Caco-2 (cell line): ENCODE measurements at regions of chr4 and their contacts with region 1.

Region 1: DNA sequence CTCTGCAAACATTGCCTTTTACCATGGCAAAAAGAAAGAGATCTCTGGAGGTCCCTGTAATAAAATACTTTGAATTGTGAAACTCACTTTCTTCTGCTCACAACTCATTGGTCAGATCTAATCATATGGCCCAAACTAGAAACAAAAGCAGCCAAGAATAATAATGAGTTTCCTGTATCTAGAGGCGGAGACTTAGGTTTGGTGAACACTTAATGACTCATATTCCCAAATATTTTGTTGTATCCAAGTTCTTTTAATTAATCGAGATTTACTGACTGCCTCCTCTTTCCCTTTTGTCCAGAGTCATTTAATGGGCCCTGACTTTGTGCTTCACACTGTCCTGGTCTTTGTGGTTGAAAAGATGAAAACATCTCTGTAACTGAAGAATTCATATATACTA is 190.6 kb downstream of the CCSER1 start:
- DNase-seq: no peak
- H3K4me3 ChIP-seq: no peak overlapping the region
- H3K4me3 Mint-ChIP-seq: no peak overlapping the region
- H3K27ac Mint-ChIP-seq: no peak overlapping the region
- H3K4me1 ChIP-seq: no peaks in the 10 kb centered on the region
- H3K4me1 Mint-ChIP-seq: no peaks in the 10 kb centered on the region
- H3K27me3 ChIP-seq: no peaks in the 10 kb centered on the region
- H3K27me3 Mint-ChIP-seq: no peaks in the 10 kb centered on the region
- CTCF ChIP-seq: no peak

Region 2: GRCh38 chr4:89268679-89269078 is 1049.1 kb before region 1 on chr4:
- CTCF ChIA-PET with region 1: no interaction called
- POLR2A ChIA-PET with region 1: no interaction called
- intact Hi-C with region 1: no loop called
- DNase-seq: no peak
- H3K4me3 ChIP-seq: no peak overlapping the region
- H3K4me3 Mint-ChIP-seq: no peak overlapping the region
- H3K27ac Mint-ChIP-seq: no peak overlapping the region
- H3K4me1 ChIP-seq: 0 out of 2 replicates have a peak, but pooled peaks cover 3% of the 10 kb centered on the region
- H3K4me1 Mint-ChIP-seq: no peaks in the 10 kb centered on the region
- H3K27me3 ChIP-seq: no peaks in the 10 kb centered on the region; the same call in 1 of the 2 replicates
- H3K27me3 Mint-ChIP-seq: peaks cover 2% of the 10 kb centered on the region
- CTCF ChIP-seq: no peak

Region 3: DNA sequence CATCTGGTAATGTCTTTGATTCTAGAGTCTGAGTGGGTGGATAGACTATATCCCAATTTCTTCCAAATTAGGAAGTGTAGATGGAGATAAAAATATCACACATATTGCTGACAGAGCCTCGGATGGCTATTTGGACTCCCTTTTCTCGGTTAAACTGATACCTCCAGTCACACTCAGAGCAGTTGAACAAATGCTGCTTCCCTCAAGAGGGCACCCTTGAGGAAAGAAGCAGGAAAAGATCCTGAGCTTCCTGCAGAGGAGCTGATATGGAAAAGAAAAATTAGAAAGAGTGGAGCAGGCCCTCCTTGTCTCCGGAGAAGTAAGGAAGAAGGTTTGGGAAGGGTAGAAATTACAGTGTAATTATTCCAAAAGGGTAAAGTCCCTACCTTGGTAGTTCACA is 286.8 kb before region 1 on chr4:
- CTCF ChIA-PET with region 1: no interaction called
- POLR2A ChIA-PET with region 1: no interaction called
- intact Hi-C with region 1: no loop called
- DNase-seq: peak in 1 of 2 experiments; percentile 44
- H3K4me3 ChIP-seq: no peak overlapping the region
- H3K4me3 Mint-ChIP-seq: no peak overlapping the region
- H3K27ac Mint-ChIP-seq: no peak overlapping the region
- H3K4me1 ChIP-seq: no peaks in the 10 kb centered on the region
- H3K4me1 Mint-ChIP-seq: no peaks in the 10 kb centered on the region
- H3K27me3 ChIP-seq: no peaks in the 10 kb centered on the region
- H3K27me3 Mint-ChIP-seq: no peaks in the 10 kb centered on the region
- CTCF ChIP-seq: peak; percentile 32 to 37

Region 4: DNA sequence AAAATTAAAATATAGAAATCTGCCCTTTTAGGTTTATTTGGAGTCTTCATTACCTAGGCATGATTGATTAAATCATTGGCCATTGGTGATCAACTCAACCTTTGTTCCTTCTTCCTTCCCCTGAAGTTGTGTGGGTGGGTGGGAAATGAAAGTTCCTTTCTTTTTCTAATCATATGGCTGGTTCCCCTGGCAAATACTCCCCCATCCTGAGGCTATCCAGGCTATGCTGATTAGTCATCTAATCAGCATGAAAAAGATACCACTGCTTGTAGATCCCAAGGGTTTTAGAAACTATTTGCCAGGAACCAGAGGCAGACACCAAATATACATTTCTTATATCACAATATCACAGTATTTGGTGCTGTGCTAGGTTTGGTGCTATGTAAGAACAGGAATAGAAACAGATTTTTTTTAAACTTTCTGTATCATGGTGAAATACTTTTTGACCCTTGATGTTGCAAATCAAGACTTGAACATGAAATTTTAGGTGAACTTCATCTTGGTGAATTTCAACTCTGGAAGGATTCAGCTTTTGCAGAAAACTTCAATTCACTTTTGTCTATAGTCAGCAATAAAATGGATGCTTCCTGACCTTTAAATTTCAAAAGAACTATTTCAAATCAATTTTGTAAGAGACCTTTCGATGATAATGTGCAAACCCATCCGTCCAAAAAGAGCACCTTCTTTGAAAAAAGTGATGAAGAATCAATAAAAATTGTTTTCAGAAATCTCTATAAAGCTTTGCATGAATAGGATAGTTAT is 119.5 kb before region 1 on chr4:
- CTCF ChIA-PET with region 1: no interaction called
- POLR2A ChIA-PET with region 1: no interaction called
- intact Hi-C with region 1: no loop called
- DNase-seq: no peak
- H3K4me3 ChIP-seq: no peak overlapping the region
- H3K4me3 Mint-ChIP-seq: no peak overlapping the region
- H3K27ac Mint-ChIP-seq: no peak overlapping the region
- H3K4me1 ChIP-seq: no peaks in the 10 kb centered on the region
- H3K4me1 Mint-ChIP-seq: peaks cover 6% of the 10 kb centered on the region
- H3K27me3 ChIP-seq: no peaks in the 10 kb centered on the region
- H3K27me3 Mint-ChIP-seq: no peaks in the 10 kb centered on the region
- CTCF ChIP-seq: no peak

Region 5: GRCh38 chr4:90357117-90357710 is 39.4 kb after region 1 on chr4:
- CTCF ChIA-PET with region 1: no interaction called
- POLR2A ChIA-PET with region 1: no interaction called
- intact Hi-C with region 1: loop called (anchors 2 kb)
- DNase-seq: peak in 1 of 2 experiments; percentile 4
- H3K4me3 ChIP-seq: no peak overlapping the region
- H3K4me3 Mint-ChIP-seq: no peak overlapping the region
- H3K27ac Mint-ChIP-seq: no peak overlapping the region
- H3K4me1 ChIP-seq: no peaks in the 10 kb centered on the region
- H3K4me1 Mint-ChIP-seq: no peaks in the 10 kb centered on the region
- H3K27me3 ChIP-seq: no peaks in the 10 kb centered on the region
- H3K27me3 Mint-ChIP-seq: no peaks in the 10 kb centered on the region
- CTCF ChIP-seq: peak; percentile 34 to 38

Region 6: GRCh38 chr4:90375081-90375480 is 57.3 kb after region 1 on chr4:
- CTCF ChIA-PET with region 1: no interaction called
- POLR2A ChIA-PET with region 1: no interaction called
- intact Hi-C with region 1: no loop called
- DNase-seq: no peak
- H3K4me3 ChIP-seq: no peak overlapping the region
- H3K4me3 Mint-ChIP-seq: no peak overlapping the region
- H3K27ac Mint-ChIP-seq: no peak overlapping the region
- H3K4me1 ChIP-seq: no peaks in the 10 kb centered on the region
- H3K4me1 Mint-ChIP-seq: no peaks in the 10 kb centered on the region
- H3K27me3 ChIP-seq: no peaks in the 10 kb centered on the region
- H3K27me3 Mint-ChIP-seq: no peaks in the 10 kb centered on the region
- CTCF ChIP-seq: no peak